ENCODE measurements at regions of chr19 and their contacts with region 1.

Region 1: DNA sequence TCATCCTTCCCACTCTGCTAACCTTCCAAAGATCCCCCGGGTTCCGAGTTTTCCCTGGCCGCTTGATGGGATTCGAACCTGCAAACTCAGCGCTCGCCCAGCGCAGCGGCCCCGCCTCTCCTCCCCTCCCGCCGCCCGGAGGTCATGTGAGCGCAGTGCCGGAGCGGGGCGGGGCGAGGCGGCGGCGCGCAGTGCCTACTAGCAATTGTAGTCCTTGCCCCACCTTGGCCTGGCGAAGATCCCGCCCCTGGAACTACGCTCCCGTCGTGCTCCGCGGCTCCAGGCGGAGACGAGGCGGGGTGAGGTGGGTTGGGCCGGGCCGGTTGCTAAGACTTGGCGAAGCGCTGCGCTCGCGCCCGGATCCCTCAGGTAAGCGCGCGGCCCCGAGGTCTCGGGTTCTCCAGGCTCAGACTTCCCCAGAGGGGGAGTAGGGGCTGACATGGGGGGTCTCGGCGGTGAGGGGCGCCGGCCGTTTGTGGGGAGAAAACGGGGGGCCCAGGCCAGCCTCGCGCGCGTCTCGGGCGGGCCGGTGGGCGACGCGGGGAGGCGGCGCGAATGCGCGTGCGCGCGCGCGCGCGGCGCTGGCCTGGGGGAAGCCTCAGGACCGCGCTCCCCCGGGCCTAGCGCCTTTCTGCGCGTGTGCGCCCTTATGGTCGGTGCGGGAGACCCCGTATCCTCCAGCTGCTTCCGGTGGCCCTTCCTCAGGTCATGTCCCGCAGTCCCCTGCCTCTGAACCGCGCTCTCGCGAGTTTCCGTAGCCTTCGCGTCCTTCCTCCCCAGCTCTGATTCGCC is at the starts of genes ADAT3 and SCAMP4:
- DNase-seq: peak; percentile 99
- H3K4me3 Mint-ChIP-seq: peak within 1 kb of the TSS; percentile 90
- H3K27ac Mint-ChIP-seq: peak within 1 kb of the TSS; percentile 83
- H3K4me1 Mint-ChIP-seq: peaks cover 27% of the 10 kb centered on the region
- H3K27me3 Mint-ChIP-seq: no peaks in the 10 kb centered on the region
- total RNA-seq, gene ADAT3: 8.4 and 9.6 TPM in 2 replicates
- total RNA-seq, gene SCAMP4: 38.0 and 41.5 TPM in 2 replicates

Region 2: DNA sequence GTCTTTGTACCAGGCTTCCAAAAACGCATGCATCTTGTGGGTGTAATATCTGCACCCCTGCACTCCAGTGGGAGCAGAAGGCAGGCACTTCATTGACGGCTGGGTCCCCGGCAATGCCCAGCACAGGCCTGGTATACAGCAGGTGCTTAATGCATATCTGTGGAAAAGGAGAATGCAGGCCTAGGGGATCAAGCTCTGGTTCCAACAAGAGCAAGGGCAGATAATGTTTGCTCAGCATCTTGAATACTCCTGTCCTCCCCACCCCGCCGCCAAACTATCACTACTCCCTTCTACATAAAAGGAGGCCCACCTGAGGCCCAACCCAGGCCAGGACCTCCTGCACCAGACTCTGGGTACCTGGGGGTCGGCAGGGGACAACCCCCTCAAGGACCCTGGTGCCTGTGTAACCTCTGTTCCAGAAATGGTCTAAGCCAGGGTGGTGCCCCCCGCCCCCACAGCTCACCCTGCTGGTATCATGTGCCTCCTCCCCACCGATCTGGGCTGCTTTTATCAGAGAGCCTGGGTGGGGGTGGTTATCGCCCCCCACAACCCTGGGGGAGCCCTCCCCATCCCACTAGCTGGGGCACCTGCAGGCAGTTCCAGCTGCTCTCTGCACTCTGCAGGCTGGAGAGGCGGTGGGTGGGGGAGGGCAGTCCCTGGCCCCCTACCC is 46.7 kb before region 1 on chr19:
- intact Hi-C with region 1: no loop called
- DNase-seq: no peak
- H3K4me3 Mint-ChIP-seq: peak overlapping the region; percentile 61
- H3K27ac Mint-ChIP-seq: no peak overlapping the region
- H3K4me1 Mint-ChIP-seq: peaks cover 37% of the 10 kb centered on the region
- H3K27me3 Mint-ChIP-seq: peaks cover 2% of the 10 kb centered on the region

Region 3: DNA sequence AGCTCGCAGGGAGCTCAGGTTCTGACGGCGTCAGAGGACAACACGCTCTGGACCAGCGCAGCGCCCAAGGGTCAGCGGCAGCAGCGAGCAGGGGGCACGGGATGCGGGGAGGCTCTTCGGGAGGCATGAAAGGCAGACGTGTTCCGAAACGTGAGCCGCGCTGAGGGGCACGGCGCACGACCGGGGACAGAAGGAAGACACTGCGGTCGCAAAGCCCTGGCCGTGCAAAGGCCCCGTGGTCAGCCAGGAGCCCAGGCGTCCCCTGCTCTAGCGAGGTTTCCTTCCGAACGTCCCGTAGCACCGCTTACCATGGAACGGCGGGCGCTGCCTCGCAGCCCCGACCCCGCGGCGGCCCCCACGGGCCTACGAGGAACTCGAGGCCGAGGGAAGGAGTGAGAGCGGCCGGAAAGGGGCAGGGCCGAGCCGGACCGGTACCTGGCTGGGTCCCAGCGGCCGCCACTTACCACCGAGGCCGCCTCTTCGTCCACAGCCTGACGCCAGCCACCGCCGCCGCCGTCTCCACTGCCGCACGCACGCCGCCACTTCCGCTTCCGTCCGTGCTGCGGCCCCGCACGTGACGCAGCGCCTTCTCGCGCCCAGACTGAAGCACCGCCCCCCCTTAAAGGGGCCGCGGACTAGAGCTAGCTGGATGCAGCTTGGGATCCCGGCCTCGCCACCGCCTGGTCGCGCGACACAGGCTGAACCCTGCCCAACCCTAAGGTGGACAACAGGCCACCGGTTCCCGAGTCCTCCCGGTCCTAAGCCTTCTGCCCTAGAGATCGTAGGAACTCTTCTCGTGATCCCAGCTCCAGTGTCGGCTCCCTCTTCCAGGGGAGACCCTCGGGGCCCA is 29.4 kb before region 1 on chr19:
- intact Hi-C with region 1: loop called (anchors 1 kb)
- DNase-seq: peak; percentile 87
- H3K4me3 Mint-ChIP-seq: peak overlapping the region; percentile 98
- H3K27ac Mint-ChIP-seq: peak overlapping the region; percentile 96
- H3K4me1 Mint-ChIP-seq: peaks cover 20% of the 10 kb centered on the region
- H3K27me3 Mint-ChIP-seq: peaks cover 2% of the 10 kb centered on the region

Region 4: DNA sequence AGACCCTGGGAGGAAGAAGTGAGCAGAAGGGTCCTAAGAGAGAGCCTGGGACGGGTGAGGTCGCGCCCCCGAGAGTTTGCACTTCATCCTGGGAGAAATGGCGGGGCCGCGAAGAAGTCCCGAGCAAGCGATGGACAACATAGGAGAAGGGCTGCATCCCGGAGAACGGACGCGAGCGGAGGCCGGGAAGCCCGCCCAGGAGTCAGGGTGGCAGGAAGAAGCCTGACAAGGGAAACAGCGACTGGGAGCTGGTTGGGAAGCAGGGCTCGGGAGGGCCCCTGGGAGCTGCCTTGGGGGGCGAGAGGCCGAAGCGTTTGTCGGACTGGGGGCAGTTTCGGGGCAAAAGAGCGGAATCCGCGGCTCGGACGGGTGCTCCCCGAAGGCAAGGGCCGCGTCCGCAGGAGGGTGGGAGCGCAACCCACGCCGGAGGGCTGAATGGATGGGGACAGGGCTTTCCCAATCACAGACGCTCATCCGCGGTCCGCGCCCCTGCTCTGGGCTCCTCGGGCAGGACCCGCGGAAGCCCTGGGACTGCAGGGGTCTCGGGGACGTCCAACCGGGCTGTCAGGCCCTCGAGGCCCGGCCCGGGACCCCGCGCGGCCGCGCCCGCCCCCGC is 20.4 kb before region 1 on chr19:
- intact Hi-C with region 1: loop called (anchors 1 kb)
- DNase-seq: no peak
- H3K4me3 Mint-ChIP-seq: peak overlapping the region; percentile 99
- H3K27ac Mint-ChIP-seq: peak overlapping the region; percentile 99
- H3K4me1 Mint-ChIP-seq: peaks cover 28% of the 10 kb centered on the region
- H3K27me3 Mint-ChIP-seq: no peaks in the 10 kb centered on the region

Region 5: DNA sequence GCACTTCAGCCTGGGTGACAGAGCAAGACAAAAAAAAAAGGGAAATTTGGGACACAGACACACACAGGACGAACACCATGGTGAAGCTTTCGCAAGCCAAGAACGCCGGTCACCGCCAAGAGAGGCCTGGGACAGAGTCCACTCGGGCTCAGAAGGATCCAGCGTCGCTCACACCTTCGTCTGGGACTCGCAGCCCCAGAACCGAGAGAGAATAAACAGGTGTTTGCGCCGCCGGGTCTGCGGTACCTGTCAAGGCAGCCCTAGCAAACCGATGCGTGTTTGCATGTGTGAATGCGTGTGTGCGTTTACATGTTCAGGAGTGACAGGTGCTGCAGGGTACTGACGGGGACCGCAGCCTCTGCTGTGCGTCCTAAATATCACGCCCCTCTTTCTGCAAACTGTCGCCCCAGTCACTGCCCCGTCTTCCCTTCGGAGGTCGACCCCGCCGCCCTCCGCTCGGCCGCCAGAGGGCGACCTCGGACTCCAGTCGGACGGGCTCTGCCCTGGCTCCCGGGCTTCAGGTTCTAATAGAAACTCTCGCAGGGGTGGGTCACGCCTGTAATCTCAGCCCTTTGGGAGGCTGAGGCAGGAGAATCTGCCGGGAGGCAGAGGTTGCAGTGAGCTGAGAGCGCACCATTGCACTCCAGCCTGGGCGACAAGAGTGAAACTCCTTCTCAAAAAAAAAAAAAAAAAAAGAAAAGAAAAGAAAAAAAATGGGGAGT is 23.9 kb after region 1 on chr19:
- intact Hi-C with region 1: loop called (anchors 2 kb)
- DNase-seq: peak; percentile 71
- H3K4me3 Mint-ChIP-seq: peak overlapping the region; percentile 77
- H3K27ac Mint-ChIP-seq: peak overlapping the region; percentile 55
- H3K4me1 Mint-ChIP-seq: peaks cover 16% of the 10 kb centered on the region
- H3K27me3 Mint-ChIP-seq: peaks cover 4% of the 10 kb centered on the region